Aorta (tissue), 5 donors: ENCODE measurements at regions of chr4 and their contacts with region 1.

Region 1: GRCh38 chr4:113232194-113232593 is 182.7 kb downstream of the ANK2 start:
- DNase-seq: no peak
- ATAC-seq: no peak
- H3K4me3 ChIP-seq: no peak overlapping the region
- H3K27ac ChIP-seq: no peak overlapping the region
- H3K4me1 ChIP-seq: no peaks in the 10 kb centered on the region
- H3K27me3 ChIP-seq: no peaks in the 10 kb centered on the region

Region 2: GRCh38 chr4:112270640-112271393 is 961.4 kb before region 1 on chr4:
- intact Hi-C with region 1: loop called in 1 of 2 experiments (anchors 5 kb)
- DNase-seq: no peak
- ATAC-seq: no peak
- H3K4me3 ChIP-seq: no peak overlapping the region
- H3K27ac ChIP-seq: no peak overlapping the region
- H3K4me1 ChIP-seq: peaks cover 0 to 4% of the 10 kb centered on the region in 2 donors
- H3K27me3 ChIP-seq: no peaks in the 10 kb centered on the region

Region 3: DNA sequence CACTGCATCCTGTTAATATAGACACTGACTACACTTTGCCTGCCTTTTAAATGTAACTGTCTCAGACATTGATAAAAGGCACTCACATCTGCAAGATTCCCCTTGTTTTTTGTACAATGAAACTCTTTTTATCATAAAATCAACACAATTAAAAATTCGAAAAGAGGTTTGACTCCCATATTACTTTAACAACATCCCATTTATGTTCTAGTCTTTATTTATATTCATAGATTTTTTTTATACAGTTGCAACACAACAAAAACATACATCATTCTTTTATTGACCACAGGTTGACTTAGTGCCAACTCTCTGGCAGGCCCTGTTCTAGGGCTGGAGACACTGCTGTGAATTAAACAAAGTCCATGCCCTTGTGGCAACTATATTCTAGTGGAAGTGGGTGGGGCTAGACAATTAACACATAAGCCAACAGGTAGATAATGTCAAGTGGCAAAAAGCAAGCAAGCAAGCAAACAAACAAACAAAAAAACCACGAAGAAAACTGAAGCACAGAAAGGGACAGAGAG is 146.0 kb before region 1 on chr4:
- intact Hi-C with region 1: no loop called
- DNase-seq: no peak
- ATAC-seq: no peak
- H3K4me3 ChIP-seq: no peak overlapping the region
- H3K27ac ChIP-seq: no peak overlapping the region
- H3K4me1 ChIP-seq: no peaks in the 10 kb centered on the region
- H3K27me3 ChIP-seq: no peaks in the 10 kb centered on the region

Region 4: GRCh38 chr4:113157086-113157857 is 74.9 kb before region 1 on chr4:
- intact Hi-C with region 1: no loop called
- DNase-seq: no peak
- ATAC-seq: no peak
- H3K4me3 ChIP-seq: no peak overlapping the region
- H3K27ac ChIP-seq: no peak overlapping the region
- H3K4me1 ChIP-seq: no peaks in the 10 kb centered on the region
- H3K27me3 ChIP-seq: no peaks in the 10 kb centered on the region

Region 5: DNA sequence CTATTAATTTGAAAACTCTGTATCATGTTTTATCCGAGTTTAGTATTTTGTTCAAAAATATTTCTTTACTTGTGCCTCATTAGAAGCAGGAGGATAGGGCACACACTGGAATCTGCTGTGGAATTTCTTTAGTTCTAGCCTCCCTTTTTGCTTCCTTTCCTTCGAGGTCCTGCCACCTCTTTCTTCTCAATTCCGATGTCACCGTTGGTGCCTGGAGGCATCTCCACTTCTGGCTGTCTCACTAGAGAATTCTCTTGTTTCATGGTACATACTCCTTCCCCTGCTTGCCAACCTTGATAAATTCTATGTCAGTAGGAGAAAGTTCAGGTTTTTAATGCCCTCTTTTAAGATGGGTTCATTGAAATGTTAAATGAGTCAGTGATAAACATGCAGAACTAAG is 42.6 kb before region 1 on chr4:
- intact Hi-C with region 1: no loop called
- DNase-seq: no peak
- ATAC-seq: no peak
- H3K4me3 ChIP-seq: no peak overlapping the region
- H3K27ac ChIP-seq: no peak overlapping the region
- H3K4me1 ChIP-seq: no peaks in the 10 kb centered on the region
- H3K27me3 ChIP-seq: no peaks in the 10 kb centered on the region